ENCODE measurements at regions of chr19 and their contacts with region 1.

Region 1: DNA sequence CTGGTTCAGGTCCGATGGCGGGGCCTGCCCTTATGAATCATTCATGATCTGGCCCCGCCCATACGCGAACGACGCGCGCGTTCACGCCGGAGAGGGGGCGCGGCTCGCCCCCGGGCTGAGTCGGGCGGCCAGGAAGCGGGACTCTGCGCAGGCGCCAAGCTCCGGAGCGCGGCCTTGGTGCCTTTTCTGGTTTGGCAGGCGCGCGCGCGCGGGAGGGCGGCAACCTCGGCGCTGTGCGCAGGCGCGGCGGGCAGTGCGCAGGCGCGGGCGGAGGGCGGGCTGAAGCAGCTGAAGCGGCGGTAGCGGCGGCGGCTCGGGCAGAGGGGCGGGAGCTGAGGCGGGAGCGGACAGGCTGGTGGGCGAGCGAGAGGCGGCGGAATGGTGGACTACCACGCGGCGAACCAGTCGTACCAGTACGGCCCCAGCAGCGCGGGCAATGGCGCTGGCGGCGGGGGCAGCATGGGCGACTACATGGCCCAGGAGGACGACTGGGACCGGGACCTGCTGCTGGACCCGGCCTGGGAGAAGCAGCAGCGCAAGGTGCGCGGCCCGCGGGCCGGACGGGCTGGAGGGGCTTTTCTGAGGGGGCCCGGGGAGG is at the start of gene ACTN4:
- DNase-seq: peak; percentile 90
- H3K4me3 ChIP-seq: peak within 1 kb of the TSS; percentile 74 to 99 (median 94)
- H3K27ac ChIP-seq: peak within 1 kb of the TSS; percentile 97 to 100 (median 98)
- H3K4me1 ChIP-seq: peaks cover 27 to 64% (median 29%) of the 10 kb centered on the region in 3 donors
- H3K27me3 ChIP-seq: no peaks in the 10 kb centered on the region
- CTCF ChIP-seq: peak in 3 of 6 experiments; percentile 4 to 61 (median 15)
- POLR2A ChIP-seq: peak in 3 of 4 donors; percentile 99 to 100 (median 100)
- total RNA-seq, gene ACTN4: 302 to 705 (median 414) TPM

Region 2: DNA sequence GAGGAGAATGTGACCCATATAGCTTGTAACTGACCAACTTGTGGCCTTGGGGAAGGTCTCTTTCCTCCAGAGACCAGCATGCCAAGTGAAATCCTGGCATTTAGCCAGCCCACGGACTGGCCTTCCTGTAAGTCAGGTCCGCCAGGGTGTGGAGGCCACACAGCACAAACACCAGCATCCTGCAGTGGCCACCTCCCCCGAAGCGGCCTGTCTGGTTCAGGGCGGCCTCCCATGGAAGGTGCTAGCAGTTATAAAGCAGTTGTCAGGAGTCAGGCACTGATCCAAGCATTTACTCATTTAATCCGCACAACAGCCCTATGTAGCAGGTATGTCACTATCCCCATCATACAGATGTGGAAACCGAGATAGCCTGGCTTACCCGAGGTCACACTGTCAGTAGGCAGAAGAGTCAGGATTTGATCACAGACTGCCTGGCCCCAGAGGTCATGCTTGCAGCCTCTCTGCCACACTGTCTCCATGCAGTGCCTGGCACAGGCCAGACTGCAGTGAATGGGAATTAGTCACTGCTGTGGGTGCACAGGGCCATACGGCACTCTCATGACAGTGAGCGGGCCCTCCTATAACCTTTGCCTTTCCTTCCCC is 60.1 kb after region 1 on chr19:
- intact Hi-C with region 1: loop called (anchors 10 kb)
- DNase-seq: no peak
- H3K4me3 ChIP-seq: no peak overlapping the region
- H3K27ac ChIP-seq: peak overlapping the region; percentile 16 to 86 (median 81)
- H3K4me1 ChIP-seq: peaks cover 29 to 93% (median 61%) of the 10 kb centered on the region in 3 donors
- H3K27me3 ChIP-seq: no peaks in the 10 kb centered on the region
- CTCF ChIP-seq: no peak
- POLR2A ChIP-seq: no peak

Region 3: GRCh38 chr19:38759590-38760003 is 112.1 kb after region 1 on chr19:
- intact Hi-C with region 1: no loop called
- DNase-seq: no peak
- H3K4me3 ChIP-seq: no peak overlapping the region
- H3K27ac ChIP-seq: no peak overlapping the region
- H3K4me1 ChIP-seq: no peaks in the 10 kb centered on the region
- H3K27me3 ChIP-seq: no peaks in the 10 kb centered on the region
- CTCF ChIP-seq: no peak
- POLR2A ChIP-seq: no peak

Region 4: DNA sequence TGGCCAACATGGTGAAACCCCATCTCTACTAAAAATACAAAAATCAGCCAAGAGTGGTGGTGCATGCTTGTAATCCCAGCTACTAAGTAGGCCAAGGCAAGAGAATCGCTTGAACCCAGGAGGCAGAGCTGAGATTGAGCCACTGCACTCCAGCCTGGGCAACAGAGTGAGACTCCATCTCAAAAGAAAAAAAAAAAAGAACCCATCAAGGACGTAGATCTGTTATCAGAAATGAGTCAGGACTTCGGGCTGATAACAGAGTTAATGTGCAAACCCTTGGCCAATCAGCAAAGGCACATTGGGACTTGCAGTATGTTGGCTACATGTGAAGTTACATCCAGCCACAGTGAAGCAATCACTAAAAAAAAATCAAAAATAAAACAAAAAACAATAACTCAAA is 136.8 kb after region 1 on chr19:
- intact Hi-C with region 1: no loop called
- DNase-seq: no peak
- H3K4me3 ChIP-seq: no peak overlapping the region
- H3K27ac ChIP-seq: no peak overlapping the region
- H3K4me1 ChIP-seq: peaks cover 5 to 30% (median 10%) of the 10 kb centered on the region in 3 donors
- H3K27me3 ChIP-seq: no peaks in the 10 kb centered on the region
- CTCF ChIP-seq: no peak
- POLR2A ChIP-seq: no peak